Activated B cell treated with CpG ODN at 0.5 μM for 24 hours (primary cell): ENCODE measurements at regions of chr18 and their contacts with region 1.

Region 1: DNA sequence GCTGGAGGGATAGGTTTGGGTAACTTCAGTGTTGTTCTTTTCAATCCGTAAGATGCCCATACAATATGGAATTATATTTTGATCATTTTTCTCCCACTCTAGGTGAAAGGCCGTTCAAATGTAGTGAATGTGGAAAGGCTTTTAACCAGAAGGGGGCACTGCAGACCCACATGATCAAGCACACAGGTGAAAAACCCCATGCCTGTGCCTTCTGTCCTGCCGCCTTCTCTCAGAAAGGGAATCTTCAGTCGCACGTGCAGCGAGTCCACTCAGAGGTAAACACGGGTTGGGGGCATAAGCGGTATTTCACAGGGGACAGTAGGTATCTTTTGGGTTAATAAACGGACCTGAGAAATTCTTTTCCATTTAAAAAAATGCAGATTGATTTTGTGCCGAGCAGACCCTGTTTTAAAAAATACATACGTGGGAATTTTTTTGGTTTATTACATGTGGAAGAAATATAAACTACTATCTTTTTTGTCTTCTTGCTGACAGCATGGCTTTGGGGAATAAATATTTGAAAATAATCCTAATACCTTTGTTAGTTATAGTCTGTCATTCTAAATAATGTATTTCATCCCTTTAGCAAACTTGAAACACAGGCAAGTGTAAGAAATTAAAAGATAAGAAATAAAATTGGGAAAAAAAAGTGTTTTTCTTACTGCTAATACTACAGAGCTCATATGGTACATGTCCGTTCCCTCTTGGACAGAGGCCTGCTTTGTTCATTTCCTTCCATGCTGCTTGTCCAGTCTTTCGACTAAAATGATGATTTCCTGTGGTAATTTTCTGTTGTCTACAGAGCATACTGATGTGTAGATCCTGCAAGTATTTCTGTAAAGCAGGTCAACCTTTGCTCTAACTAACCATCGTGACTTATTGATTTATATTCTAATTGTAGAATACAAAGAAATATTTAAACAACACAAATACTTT is 53.3 kb downstream of the ZNF236 start:
- DNase-seq: no peak
- ATAC-seq: no peak
- H3K4me3 Mint-ChIP-seq: no peak overlapping the region
- H3K27ac Mint-ChIP-seq: no peak overlapping the region
- H3K4me1 Mint-ChIP-seq: no peaks in the 10 kb centered on the region
- H3K27me3 Mint-ChIP-seq: no peaks in the 10 kb centered on the region
- CTCF ChIP-seq: no peak

Region 2: DNA sequence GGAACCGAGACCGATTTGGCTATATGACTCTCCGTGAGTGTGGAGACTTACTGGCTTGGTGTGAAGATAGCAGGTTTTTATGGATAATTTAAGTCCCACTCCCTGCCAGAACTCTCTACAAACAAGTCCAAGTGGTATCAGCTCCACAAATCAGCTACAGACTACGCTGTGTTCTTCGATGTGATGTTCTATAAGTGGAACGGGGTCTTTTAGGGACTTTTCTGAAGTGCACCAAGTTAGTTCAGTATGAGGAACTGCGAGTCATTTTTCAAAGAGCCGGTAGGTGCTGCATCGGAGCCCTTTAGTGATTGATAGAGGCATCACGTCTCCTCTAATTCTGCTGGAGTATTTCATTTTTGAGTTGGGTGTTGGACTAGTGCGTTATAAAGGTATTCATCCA is 1558.0 kb before region 1 on chr18:
- CTCF ChIA-PET with region 1: no interaction called
- POLR2A ChIA-PET with region 1: no interaction called
- intact Hi-C with region 1: no loop called
- DNase-seq: no peak
- ATAC-seq: peak; percentile 78
- H3K4me3 Mint-ChIP-seq: no peak overlapping the region
- H3K27ac Mint-ChIP-seq: peak overlapping the region; percentile 59
- H3K4me1 Mint-ChIP-seq: peaks cover 4% of the 10 kb centered on the region
- H3K27me3 Mint-ChIP-seq: peaks cover 2% of the 10 kb centered on the region
- CTCF ChIP-seq: no peak

Region 3: GRCh38 chr18:77397617-77398016 is 522.0 kb after region 1 on chr18:
- CTCF ChIA-PET with region 1: no interaction called
- POLR2A ChIA-PET with region 1: no interaction called
- intact Hi-C with region 1: no loop called
- DNase-seq: no peak
- ATAC-seq: no peak
- H3K4me3 Mint-ChIP-seq: no peak overlapping the region
- H3K27ac Mint-ChIP-seq: no peak overlapping the region
- H3K4me1 Mint-ChIP-seq: no peaks in the 10 kb centered on the region
- H3K27me3 Mint-ChIP-seq: peaks cover 2% of the 10 kb centered on the region
- CTCF ChIP-seq: no peak

Region 4: DNA sequence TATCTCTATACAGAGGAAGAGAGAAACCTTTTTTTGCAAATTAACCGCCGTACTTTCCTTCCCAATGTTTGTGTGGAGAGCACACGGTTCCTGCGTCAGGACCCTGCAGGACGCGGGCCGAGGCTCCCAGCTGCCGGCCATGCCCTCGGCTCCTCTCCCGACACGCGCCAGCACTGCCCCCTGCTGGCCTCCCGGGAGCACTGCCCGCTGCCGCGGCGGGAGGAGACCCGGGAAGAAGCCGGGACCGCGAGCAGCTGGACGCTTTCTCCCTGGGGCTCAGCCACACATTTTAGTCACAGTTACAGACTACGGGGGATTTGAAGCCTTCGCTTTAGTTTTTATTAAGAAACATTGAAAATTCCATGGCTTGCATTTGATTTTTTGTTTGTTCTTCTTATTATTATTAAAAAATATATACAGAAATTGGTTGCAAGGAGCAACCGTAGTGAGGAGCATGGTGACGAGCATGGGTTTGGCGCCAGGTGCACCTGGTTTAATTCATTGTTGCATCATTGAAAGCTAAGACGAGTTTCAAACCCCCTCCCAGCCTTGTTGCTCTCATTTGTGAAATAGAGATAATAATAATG is 775.2 kb after region 1 on chr18:
- CTCF ChIA-PET with region 1: interaction called, 3 read pairs
- POLR2A ChIA-PET with region 1: no interaction called
- intact Hi-C with region 1: loop called (anchors 2 kb)
- DNase-seq: peak; percentile 35
- ATAC-seq: peak; percentile 47
- H3K4me3 Mint-ChIP-seq: no peak overlapping the region
- H3K27ac Mint-ChIP-seq: no peak overlapping the region
- H3K4me1 Mint-ChIP-seq: no peaks in the 10 kb centered on the region
- H3K27me3 Mint-ChIP-seq: peaks cover 23% of the 10 kb centered on the region
- CTCF ChIP-seq: no peak